ENCODE measurements at regions of chrX and their contacts with region 1.

Region 1: DNA sequence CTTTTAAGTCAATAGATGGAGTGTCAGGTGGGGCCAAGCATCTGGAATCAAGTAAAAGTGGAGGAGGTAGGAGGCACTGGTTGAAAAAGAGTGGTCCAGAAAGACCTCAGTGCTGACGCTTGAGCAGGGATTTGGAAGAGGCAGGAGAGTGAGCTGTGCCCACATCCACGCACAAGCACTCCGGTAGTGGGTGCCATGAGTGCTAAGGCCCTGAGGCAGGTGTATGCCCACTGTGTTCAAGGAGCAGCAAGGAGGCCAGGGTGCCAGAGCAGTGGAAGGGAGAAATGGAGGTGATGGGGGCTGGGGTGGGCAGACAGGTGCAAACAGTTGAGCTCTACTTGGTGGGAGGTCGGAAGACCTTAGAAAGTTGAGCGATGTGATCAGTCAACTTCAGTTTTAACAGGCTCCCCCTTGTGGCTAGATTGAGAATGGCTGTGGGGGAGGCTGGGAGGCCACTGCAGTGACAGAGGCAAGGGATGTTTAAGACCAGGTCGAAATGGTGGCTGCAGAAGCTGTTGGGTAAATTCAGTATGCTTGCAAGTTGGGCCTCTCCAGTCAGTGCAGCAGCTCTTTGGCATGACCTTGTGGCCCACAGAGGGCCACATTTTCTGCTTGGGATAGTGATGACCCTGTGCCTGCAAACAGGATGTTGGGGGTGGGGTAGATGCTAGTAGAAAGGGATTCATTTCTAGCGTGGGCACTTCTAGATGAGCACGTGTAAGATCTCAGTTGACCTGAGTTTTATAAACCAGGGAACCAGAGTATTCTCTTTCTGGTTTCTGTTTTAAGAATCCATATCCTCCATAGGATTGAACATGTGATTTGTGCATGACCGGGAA is 12.7 kb downstream of the TKTL1 start:
- DNase-seq: peak; percentile 83
- ATAC-seq: peak; percentile 84
- H3K4me3 Mint-ChIP-seq: no peak overlapping the region
- H3K27ac Mint-ChIP-seq: no peak overlapping the region
- H3K4me1 Mint-ChIP-seq: peaks cover 3% of the 10 kb centered on the region
- H3K27me3 Mint-ChIP-seq: no peaks in the 10 kb centered on the region; the same call in 1 of the 2 replicates
- CTCF ChIP-seq: peak; percentile 58

Region 2: DNA sequence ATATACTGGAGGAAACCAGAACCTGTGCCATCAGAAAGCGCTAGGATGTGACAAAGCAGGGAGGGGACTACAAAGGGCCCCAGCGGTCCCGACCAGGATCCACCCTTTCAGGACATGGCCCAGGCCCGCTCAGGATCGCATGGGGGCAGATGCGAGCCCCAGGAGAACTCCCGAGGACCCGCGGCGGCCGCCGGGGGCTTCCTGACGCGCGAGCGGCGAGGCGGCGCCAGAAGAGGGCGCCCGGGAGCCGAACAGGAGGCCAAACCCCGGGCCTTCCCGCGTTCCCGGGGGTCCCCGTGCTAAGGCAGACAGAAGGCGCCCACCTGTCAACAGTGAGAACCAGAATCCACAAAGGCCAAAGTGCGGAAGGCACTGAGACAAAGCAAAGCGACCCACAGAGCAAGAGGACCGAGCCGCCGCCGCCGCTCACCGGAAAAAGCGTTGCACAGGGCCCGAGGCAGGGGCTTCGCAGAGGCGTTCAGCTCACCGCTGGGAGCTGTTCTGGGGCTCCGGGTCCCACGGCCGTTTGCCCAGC is 171.6 kb before region 1 on chrX:
- CTCF ChIA-PET with region 1: interaction called, 15 read pairs
- POLR2A ChIA-PET with region 1: no interaction called
- DNase-seq: peak; percentile 81
- ATAC-seq: peak; percentile 97
- H3K4me3 Mint-ChIP-seq: peak overlapping the region; percentile 52
- H3K27ac Mint-ChIP-seq: no peak overlapping the region
- H3K4me1 Mint-ChIP-seq: peaks cover 9% of the 10 kb centered on the region
- H3K27me3 Mint-ChIP-seq: peaks cover 16% of the 10 kb centered on the region
- CTCF ChIP-seq: peak; percentile 42; the same call in 1 of the 2 replicates

Region 3: GRCh38 chrX:154298312-154298711 is 10.0 kb before region 1 on chrX:
- CTCF ChIA-PET with region 1: interaction called, 12 read pairs
- POLR2A ChIA-PET with region 1: no interaction called
- DNase-seq: no peak
- ATAC-seq: no peak
- H3K4me3 Mint-ChIP-seq: no peak overlapping the region
- H3K27ac Mint-ChIP-seq: no peak overlapping the region
- H3K4me1 Mint-ChIP-seq: no peaks in the 10 kb centered on the region
- H3K27me3 Mint-ChIP-seq: no peaks in the 10 kb centered on the region
- CTCF ChIP-seq: no peak

Region 4: GRCh38 chrX:154384284-154384892 is 76.1 kb after region 1 on chrX:
- CTCF ChIA-PET with region 1: no interaction called
- POLR2A ChIA-PET with region 1: no interaction called
- DNase-seq: no peak
- ATAC-seq: no peak
- H3K4me3 Mint-ChIP-seq: no peak overlapping the region
- H3K27ac Mint-ChIP-seq: no peak overlapping the region
- H3K4me1 Mint-ChIP-seq: peaks cover 26% of the 10 kb centered on the region
- H3K27me3 Mint-ChIP-seq: no peaks in the 10 kb centered on the region
- CTCF ChIP-seq: no peak